ENCODE measurements at regions of chr1 and their contacts with region 1.

Region 1: GRCh38 chr1:67053785-67054772 is at the start of gene SLC35D1:
- DNase-seq: peak; percentile 39
- ATAC-seq: peak; percentile 83
- H3K4me3 ChIP-seq: peak within 1 kb of the TSS; percentile 82
- H3K27ac ChIP-seq: peak within 1 kb of the TSS; percentile 78
- H3K4me1 ChIP-seq: no peaks in the 10 kb centered on the region
- H3K27me3 ChIP-seq: no peaks in the 10 kb centered on the region; a peak in 1 of 4 replicates
- CTCF ChIP-seq: no peak
- EP300 ChIP-seq: no peak
- POLR2A ChIP-seq: peak; percentile 87
- RAD21 ChIP-seq: no peak
- polyA plus RNA-seq, gene SLC35D1: 2.9 to 3.4 TPM

Region 2: DNA sequence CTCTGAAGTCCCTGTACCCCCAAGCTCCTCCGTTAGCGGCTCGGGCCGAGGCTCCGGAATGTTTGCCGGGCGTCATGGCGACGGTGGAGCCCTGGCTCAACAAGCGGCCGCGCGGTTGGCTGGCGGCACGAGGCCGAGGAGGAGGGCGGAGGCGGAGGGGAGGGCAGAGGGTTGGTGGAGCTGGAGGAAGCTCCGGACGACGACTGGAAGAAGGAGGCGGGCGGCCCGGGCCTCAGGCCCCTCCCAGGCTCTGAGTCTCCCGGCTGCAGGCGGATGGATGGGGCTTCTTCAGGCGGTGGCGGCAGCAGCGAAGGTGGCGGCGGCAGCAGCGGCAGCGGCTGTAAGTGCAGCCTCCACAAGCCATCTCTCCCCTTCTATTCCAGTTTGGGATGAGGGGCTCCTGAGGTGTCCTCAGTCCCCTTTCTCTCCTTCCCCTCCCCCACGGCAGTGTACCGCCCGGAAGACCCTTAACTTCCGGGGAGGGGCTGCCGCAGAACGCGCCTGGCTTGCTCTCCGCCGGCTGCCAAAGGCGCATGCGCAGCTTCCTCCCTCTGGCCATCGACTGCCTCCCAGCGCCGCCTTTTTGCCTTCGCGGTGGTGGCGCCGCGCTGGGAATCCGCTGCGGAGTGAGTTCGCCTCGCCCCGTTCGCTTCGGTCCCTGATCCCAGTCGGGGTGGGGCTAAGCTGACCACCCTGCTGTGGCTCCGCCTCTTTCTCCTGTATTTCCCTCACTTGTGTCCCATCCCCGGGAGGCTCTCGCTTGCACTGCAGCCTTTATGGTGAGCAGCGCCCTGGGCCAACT is 129.1 kb before region 1 on chr1 and contains the starts of genes DNAI4 and MIER1:
- CTCF ChIA-PET with region 1: no interaction called
- POLR2A ChIA-PET with region 1: no interaction called
- RAD21 ChIA-PET with region 1: no interaction called
- SMC1A ChIA-PET with region 1: no interaction called
- in situ Hi-C with region 1: no loop called
- intact Hi-C with region 1: loop called (anchors 5 kb)
- DNase-seq: peak; percentile 87
- ATAC-seq: peak; percentile 96
- H3K4me3 ChIP-seq: peak within 1 kb of the TSS; percentile 79
- H3K27ac ChIP-seq: peak within 1 kb of the TSS; percentile 83
- H3K4me1 ChIP-seq: peaks cover 10% of the 10 kb centered on the region; the same call in 1 of the 2 replicates
- H3K27me3 ChIP-seq: no peaks in the 10 kb centered on the region
- CTCF ChIP-seq: peak; percentile 14 to 30 (median 21); a peak in 3 of 6 replicates
- EP300 ChIP-seq: no peak
- POLR2A ChIP-seq: peak; percentile 85
- RAD21 ChIP-seq: no peak
- polyA plus RNA-seq, gene DNAI4: 0.15 to 0.21 TPM
- polyA plus RNA-seq, gene MIER1: 16.1 to 24.6 TPM

Region 3: DNA sequence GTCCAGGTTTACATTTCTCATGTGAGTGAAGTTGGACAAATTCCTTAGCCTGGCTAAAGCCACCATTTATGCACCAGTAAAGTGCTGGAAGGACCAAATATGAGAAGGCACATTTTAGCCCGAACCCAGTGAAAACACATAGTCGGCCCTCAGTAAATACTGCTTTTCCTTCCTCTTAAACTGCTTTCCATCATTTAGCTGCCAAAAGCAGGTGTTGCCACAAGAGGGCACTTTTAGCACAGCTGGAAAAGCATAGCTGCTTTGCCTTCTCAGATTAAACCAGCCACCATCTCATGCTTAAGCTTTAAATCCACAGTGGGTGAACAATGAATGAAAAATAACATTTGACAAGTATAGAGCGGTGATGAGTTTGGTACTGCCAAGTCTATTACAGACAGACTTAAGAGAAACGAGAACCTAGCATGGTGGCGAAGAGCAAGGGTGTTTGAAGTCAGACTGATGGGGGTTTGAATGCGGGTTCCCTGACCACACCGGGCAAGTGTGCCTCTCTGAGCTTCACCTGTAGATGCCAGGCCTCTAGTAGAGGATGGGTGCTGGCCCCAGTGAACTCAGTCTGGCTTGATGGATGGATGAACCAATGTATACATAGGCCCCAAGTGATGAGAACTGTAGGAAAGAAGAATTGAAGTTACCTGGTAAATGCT is 57.9 kb before region 1 on chr1:
- CTCF ChIA-PET with region 1: interaction called, 6 read pairs
- POLR2A ChIA-PET with region 1: no interaction called
- RAD21 ChIA-PET with region 1: interaction called, 3 read pairs
- SMC1A ChIA-PET with region 1: interaction called, 11 read pairs
- in situ Hi-C with region 1: no loop called
- intact Hi-C with region 1: loop called (anchors 2 kb)
- DNase-seq: peak; percentile 59
- ATAC-seq: peak; percentile 89
- H3K4me3 ChIP-seq: no peak overlapping the region
- H3K27ac ChIP-seq: no peak overlapping the region
- H3K4me1 ChIP-seq: no peaks in the 10 kb centered on the region
- H3K27me3 ChIP-seq: no peaks in the 10 kb centered on the region
- CTCF ChIP-seq: peak; percentile 76 to 85 (median 81)
- EP300 ChIP-seq: no peak
- POLR2A ChIP-seq: no peak
- RAD21 ChIP-seq: peak; percentile 94

Region 4: GRCh38 chr1:67110352-67110751 is 56.3 kb after region 1 on chr1:
- CTCF ChIA-PET with region 1: no interaction called
- POLR2A ChIA-PET with region 1: no interaction called
- RAD21 ChIA-PET with region 1: no interaction called
- SMC1A ChIA-PET with region 1: interaction called, 3 read pairs
- in situ Hi-C with region 1: no loop called
- intact Hi-C with region 1: loop called (anchors 1 kb)
- DNase-seq: no peak
- ATAC-seq: peak; percentile 71
- H3K4me3 ChIP-seq: no peak overlapping the region
- H3K27ac ChIP-seq: no peak overlapping the region
- H3K4me1 ChIP-seq: peaks cover 13% of the 10 kb centered on the region
- H3K27me3 ChIP-seq: no peaks in the 10 kb centered on the region
- CTCF ChIP-seq: no peak
- EP300 ChIP-seq: no peak
- POLR2A ChIP-seq: no peak
- RAD21 ChIP-seq: no peak

Measured in GM12878 (cell line).